Posterior vena cava (tissue), 2 donors: ENCODE measurements at regions of chr7 and their contacts with region 1.

Region 1: DNA sequence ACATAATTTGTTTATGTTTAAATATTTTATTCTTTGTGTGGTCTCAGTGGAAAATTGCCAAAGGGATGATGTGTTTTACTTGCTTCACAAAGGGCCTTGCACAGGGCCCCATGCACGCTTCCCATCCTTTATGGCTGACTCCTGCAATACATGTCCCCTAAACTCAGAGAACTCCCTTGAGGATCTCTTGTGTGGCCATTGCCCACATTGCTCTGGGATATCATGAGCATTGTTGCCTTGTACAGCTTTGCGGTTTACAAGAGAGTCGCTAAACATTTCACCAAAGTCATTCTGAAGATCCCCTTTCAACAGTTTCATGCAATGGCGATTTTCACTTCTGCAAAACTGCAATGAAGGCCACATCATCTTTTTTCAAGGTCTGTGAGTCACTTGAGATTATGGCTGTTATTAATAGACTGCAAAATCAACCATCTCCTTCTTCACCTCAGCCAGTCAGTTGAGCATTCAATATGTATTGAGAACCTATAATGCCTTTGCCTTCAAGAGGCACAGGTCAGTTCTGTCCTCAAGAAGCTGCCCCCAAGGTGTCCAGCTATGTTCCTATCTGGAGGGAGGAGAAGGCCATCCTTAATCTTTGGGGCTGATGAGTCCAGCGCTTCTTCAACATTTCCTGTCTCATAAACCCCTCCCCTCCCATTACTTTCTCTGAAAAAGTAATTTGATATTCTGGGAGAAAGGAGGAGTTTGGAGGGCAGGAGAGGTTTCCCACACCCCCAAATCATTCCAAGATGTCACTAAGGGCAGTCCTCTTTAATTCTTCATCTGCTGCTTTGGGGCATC is 108.1 kb downstream of the CCDC71L start:
- DNase-seq: no peak

Region 2: DNA sequence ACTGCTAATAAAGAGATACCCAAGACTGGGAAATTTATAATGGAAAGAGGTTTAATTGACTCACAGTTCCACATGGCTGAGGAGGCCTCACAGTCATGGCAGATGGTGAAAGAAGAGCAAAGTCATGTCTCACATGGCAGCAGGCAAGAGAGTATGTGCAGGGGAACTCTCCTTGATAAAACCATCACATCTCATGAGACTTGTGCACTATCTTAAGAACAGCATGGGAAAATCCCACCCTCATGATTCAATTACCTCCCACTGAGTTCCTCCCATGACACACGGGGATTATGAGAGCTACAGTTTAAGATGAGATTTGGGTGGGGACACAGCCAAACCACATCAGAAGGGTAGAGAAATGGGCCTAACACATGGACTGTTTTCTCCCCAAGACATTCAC is 48.2 kb before region 1 on chr7:
- intact Hi-C with region 1: loop called in 1 of 2 experiments (anchors 2 kb)
- DNase-seq: no peak

Region 3: DNA sequence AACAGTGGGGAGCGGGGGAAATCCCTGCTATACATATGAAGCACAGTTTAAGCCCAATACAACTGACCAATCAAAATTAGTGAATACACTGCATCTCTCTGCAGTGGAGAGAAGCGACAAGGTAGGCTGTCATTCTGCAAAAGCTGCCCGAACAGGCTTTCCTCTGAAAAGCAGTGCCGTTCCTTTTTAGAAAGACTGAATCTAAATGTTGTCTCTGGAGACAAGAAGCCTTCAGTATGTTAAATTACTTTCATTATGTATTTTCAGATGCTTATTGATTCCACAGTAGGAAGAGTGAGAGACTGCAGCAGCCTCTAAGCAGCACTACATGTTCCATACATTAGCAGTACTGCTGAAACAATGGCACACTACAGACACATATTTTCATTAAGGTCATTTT is 917.1 kb after region 1 on chr7 and contains the start of gene GPR22:
- intact Hi-C with region 1: loop called in 1 of 2 experiments (anchors 5 kb)
- DNase-seq: no peak
- total RNA-seq, gene GPR22: not detected